Endothelial cell of umbilical vein (primary cell): ENCODE measurements at regions of chr15 and their contacts with region 1.

Region 1: DNA sequence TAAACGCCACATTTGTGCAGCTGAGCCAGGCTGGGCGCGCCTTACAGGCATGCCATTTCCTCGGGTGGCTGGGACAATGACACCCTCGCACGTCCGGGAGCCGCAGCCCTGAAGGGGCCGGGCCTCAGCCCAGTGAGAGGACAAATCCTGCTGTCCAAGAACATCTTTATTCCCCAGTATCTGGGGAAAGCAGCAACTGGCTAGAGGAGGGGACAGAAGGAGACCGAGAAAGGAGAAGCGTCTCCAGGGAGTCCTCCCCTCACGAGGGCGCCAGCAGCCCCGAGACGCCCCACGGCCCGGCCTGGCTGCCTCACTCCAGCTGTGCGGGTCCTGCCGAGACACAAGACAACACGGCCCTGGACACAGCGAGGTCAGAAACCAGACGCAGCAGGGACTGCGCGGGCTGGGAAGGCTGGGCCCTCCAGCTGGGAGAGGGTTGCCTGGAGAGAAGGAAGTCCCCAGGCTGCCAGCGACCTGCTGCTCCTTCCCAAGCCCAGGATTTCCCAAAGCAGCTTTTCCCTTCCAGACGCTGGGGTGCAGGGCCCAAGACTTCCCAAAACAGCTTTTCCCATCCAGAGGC is 130.2 kb downstream of the CHSY1 start:
- DNase-seq: peak; percentile 78
- H3K4me3 ChIP-seq: no peak overlapping the region
- H3K27ac ChIP-seq: no peak overlapping the region
- H3K4me1 ChIP-seq: peaks cover 3% of the 10 kb centered on the region
- H3K27me3 ChIP-seq: no peaks in the 10 kb centered on the region
- CTCF ChIP-seq: peak; percentile 28 to 66
- POLR2A ChIP-seq: no peak

Region 2: GRCh38 chr15:101135532-101136166 is 14.0 kb after region 1 on chr15:
- CTCF ChIA-PET with region 1: no interaction called
- POLR2A ChIA-PET with region 1: no interaction called
- dilution Hi-C with region 1: no loop called
- intact Hi-C with region 1: no loop called
- DNase-seq: no peak
- H3K4me3 ChIP-seq: no peak overlapping the region
- H3K27ac ChIP-seq: no peak overlapping the region
- H3K4me1 ChIP-seq: no peaks in the 10 kb centered on the region
- H3K27me3 ChIP-seq: no peaks in the 10 kb centered on the region
- CTCF ChIP-seq: no peak
- POLR2A ChIP-seq: no peak

Region 3: GRCh38 chr15:101183226-101183930 is 61.8 kb after region 1 on chr15:
- CTCF ChIA-PET with region 1: interaction called, 5 read pairs
- POLR2A ChIA-PET with region 1: interaction called, 3 read pairs
- dilution Hi-C with region 1: no loop called
- intact Hi-C with region 1: loop called (anchors 2 kb)
- DNase-seq: peak; percentile 90
- H3K4me3 ChIP-seq: peak overlapping the region in 1 of 3 experiments; percentile 8
- H3K27ac ChIP-seq: peak overlapping the region; percentile 57
- H3K4me1 ChIP-seq: peaks cover 49% of the 10 kb centered on the region
- H3K27me3 ChIP-seq: no peaks in the 10 kb centered on the region
- CTCF ChIP-seq: no peak
- POLR2A ChIP-seq: no peak